Gastrocnemius medialis (tissue), 4 donors: ENCODE measurements at regions of chr9 and their contacts with region 1.

Region 1: GRCh38 chr9:79432485-79432884 is 139.3 kb upstream of the TLE4 start:
- DNase-seq: no peak
- ATAC-seq: no peak
- H3K4me3 ChIP-seq: no peak overlapping the region
- H3K27ac ChIP-seq: no peak overlapping the region
- H3K4me1 ChIP-seq: no peaks in the 10 kb centered on the region
- H3K27me3 ChIP-seq: no peaks in the 10 kb centered on the region
- CTCF ChIP-seq: no peak
- POLR2A ChIP-seq: no peak

Region 2: GRCh38 chr9:79542735-79543620 is 110.5 kb after region 1 on chr9:
- in situ Hi-C with region 1: loop called in 1 of 4 experiments (anchors 25 kb)
- intact Hi-C with region 1: no loop called
- DNase-seq: no peak
- ATAC-seq: no peak
- H3K4me3 ChIP-seq: no peak overlapping the region
- H3K27ac ChIP-seq: no peak overlapping the region
- H3K4me1 ChIP-seq: no peaks in the 10 kb centered on the region
- H3K27me3 ChIP-seq: no peaks in the 10 kb centered on the region
- CTCF ChIP-seq: no peak
- POLR2A ChIP-seq: no peak